Aorta (tissue), 5 donors: ENCODE measurements at regions of chr13 and their contacts with region 1.

Region 1: GRCh38 chr13:41827507-41828213 is 133.2 kb downstream of the VWA8 start:
- DNase-seq: no peak
- ATAC-seq: peak; percentile 71
- H3K4me3 ChIP-seq: no peak overlapping the region
- H3K27ac ChIP-seq: no peak overlapping the region
- H3K4me1 ChIP-seq: peaks cover 0 to 3% of the 10 kb centered on the region in 2 donors
- H3K27me3 ChIP-seq: no peaks in the 10 kb centered on the region

Region 2: DNA sequence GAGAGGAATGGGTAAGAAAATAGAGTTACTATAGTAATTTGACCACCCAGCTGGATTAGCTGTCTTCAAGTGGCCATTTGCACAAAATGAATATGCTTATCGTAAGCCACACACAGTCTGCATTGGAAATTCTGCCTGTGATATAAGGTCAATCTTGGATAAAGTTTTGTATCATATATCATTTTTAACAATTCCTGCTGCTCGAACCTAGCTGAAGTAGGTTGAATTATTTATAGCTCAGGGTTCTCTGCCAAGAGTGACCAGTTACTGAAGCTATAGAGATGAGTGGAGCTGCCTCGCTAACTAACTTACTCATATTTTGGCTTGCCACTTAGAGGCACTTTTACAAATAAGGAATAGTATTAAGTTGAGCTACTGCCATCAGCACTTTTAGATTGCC is 149.4 kb before region 1 on chr13:
- intact Hi-C with region 1: loop called in 1 of 2 experiments (anchors 10 kb)
- DNase-seq: no peak
- ATAC-seq: no peak
- H3K4me3 ChIP-seq: no peak overlapping the region
- H3K27ac ChIP-seq: peak overlapping the region in 1 of 2 donors; percentile 36
- H3K4me1 ChIP-seq: peaks cover 2 to 3% of the 10 kb centered on the region in 2 donors
- H3K27me3 ChIP-seq: no peaks in the 10 kb centered on the region

Region 3: DNA sequence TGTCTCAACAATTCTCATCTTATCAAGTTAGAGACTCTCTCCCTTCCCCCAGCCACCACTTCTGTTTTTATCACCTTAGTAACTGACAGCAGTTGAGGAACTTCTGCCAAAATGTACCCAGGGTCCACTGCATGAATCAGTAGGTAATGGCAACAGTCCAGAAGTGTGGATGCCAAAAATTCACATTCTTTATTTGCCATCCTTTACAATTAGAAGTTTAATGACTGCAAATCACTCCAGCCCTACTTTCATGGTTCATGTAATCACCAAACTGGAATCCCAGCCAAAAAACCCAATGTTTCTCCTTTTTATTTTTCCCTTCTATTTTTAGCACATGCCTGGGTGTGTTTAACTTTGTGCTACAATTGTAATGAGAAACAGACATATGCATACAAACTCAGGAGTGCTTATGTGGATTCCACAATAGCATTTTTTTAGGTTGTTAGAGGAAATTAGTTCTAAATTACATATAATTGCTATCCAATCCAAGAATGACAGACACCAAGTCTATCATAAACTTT is 126.8 kb before region 1 on chr13:
- intact Hi-C with region 1: loop called in 1 of 2 experiments (anchors 10 kb)
- DNase-seq: no peak
- ATAC-seq: peak; percentile 43
- H3K4me3 ChIP-seq: no peak overlapping the region
- H3K27ac ChIP-seq: no peak overlapping the region
- H3K4me1 ChIP-seq: peaks cover 4% of the 10 kb centered on the region in 2 donors
- H3K27me3 ChIP-seq: no peaks in the 10 kb centered on the region